Heart left ventricle (tissue), 16 donors: ENCODE measurements at regions of chr9 and their contacts with region 1.

Region 1: DNA sequence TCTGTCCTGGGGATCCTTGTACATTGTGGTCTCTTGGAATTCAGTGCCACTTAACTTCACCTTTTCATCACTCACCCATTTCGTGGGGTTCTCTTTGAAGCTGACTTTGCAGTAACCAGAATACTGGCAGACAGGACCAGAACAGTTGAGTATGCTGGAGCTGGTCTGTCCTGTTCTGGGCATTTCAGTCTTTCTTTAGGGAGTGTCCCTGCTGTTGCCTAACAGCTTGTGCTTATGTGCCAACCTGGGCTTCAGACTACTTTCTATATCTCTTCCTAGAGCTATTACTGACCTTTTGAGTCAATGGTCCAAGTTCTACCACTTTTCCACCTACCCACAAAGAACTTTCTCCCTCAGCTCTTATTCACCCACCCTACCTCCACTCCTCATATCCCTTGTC is 10.0 kb upstream of the INSL6 start:
- DNase-seq: no peak
- ATAC-seq: no peak
- H3K4me3 ChIP-seq: no peak overlapping the region
- H3K27ac ChIP-seq: no peak overlapping the region
- H3K4me1 ChIP-seq: no peaks in the 10 kb centered on the region
- H3K27me3 ChIP-seq: no peaks in the 10 kb centered on the region
- CTCF ChIP-seq: no peak
- POLR2A ChIP-seq: no peak

Region 2: GRCh38 chr9:5425006-5425628 is 229.7 kb after region 1 on chr9:
- intact Hi-C with region 1: loop called in 1 of 10 experiments (anchors 5 kb)
- DNase-seq: no peak
- ATAC-seq: no peak
- H3K4me3 ChIP-seq: no peak overlapping the region
- H3K27ac ChIP-seq: no peak overlapping the region
- H3K4me1 ChIP-seq: no peaks in the 10 kb centered on the region
- H3K27me3 ChIP-seq: no peaks in the 10 kb centered on the region
- CTCF ChIP-seq: peak; percentile 18 to 49 (median 36)
- POLR2A ChIP-seq: no peak